Transverse colon (tissue), 4 donors: ENCODE measurements at regions of chr6 and their contacts with region 1.

Region 1: GRCh38 chr6:30483677-30484279 is 5.5 kb upstream of the HLA-E start:
- DNase-seq: no peak
- H3K4me3 ChIP-seq: no peak overlapping the region
- H3K27ac ChIP-seq: no peak overlapping the region
- H3K4me1 ChIP-seq: peaks cover 0 to 12% (median 7%) of the 10 kb centered on the region in 4 donors
- H3K27me3 ChIP-seq: peaks cover 49% of the 10 kb centered on the region
- CTCF ChIP-seq: peak; percentile 44 to 70 (median 50)
- EP300 ChIP-seq: no peak
- POLR2A ChIP-seq: no peak

Region 2: GRCh38 chr6:30463651-30464618 is 19.8 kb before region 1 on chr6:
- in situ Hi-C with region 1: no loop called
- intact Hi-C with region 1: no loop called
- DNase-seq: peak; percentile 61
- H3K4me3 ChIP-seq: peak overlapping the region in 1 of 4 donors; percentile 2
- H3K27ac ChIP-seq: no peak overlapping the region
- H3K4me1 ChIP-seq: peaks cover 0 to 34% (median 16%) of the 10 kb centered on the region in 4 donors
- H3K27me3 ChIP-seq: peaks cover 97% of the 10 kb centered on the region
- CTCF ChIP-seq: no peak
- EP300 ChIP-seq: no peak
- POLR2A ChIP-seq: no peak

Region 3: GRCh38 chr6:30533460-30534294 is 49.9 kb after region 1 on chr6:
- in situ Hi-C with region 1: loop called in 2 of 4 experiments (anchors 5 kb)
- intact Hi-C with region 1: loop called (anchors 5 kb)
- DNase-seq: no peak
- H3K4me3 ChIP-seq: no peak overlapping the region
- H3K27ac ChIP-seq: no peak overlapping the region
- H3K4me1 ChIP-seq: peaks cover 0 to 23% (median 4%) of the 10 kb centered on the region in 4 donors
- H3K27me3 ChIP-seq: no peaks in the 10 kb centered on the region
- CTCF ChIP-seq: no peak
- EP300 ChIP-seq: no peak
- POLR2A ChIP-seq: no peak

Region 4: GRCh38 chr6:30544666-30545272 is 61.0 kb after region 1 on chr6:
- in situ Hi-C with region 1: loop called in 3 of 4 experiments (anchors 5 kb)
- intact Hi-C with region 1: no loop called
- DNase-seq: no peak
- H3K4me3 ChIP-seq: no peak overlapping the region
- H3K27ac ChIP-seq: no peak overlapping the region
- H3K4me1 ChIP-seq: peaks cover 0 to 10% (median 6%) of the 10 kb centered on the region in 4 donors
- H3K27me3 ChIP-seq: no peaks in the 10 kb centered on the region
- CTCF ChIP-seq: peak; percentile 72 to 82 (median 79)
- EP300 ChIP-seq: no peak
- POLR2A ChIP-seq: no peak

Region 5: GRCh38 chr6:30599625-30600324 is 116.0 kb after region 1 on chr6:
- in situ Hi-C with region 1: loop called in 1 of 4 experiments (anchors 5 kb)
- intact Hi-C with region 1: no loop called
- DNase-seq: no peak
- H3K4me3 ChIP-seq: no peak overlapping the region
- H3K27ac ChIP-seq: no peak overlapping the region
- H3K4me1 ChIP-seq: no peaks in the 10 kb centered on the region
- H3K27me3 ChIP-seq: no peaks in the 10 kb centered on the region
- CTCF ChIP-seq: no peak
- EP300 ChIP-seq: no peak
- POLR2A ChIP-seq: no peak